K562 (cell line): ENCODE measurements at regions of chr1 and their contacts with region 1.

Region 1: GRCh38 chr1:27603681-27604578 is at the start of gene AHDC1:
- DNase-seq: peak; percentile 90 to 96 (median 93)
- ATAC-seq: peak; percentile 82
- H3K4me3 ChIP-seq: peak within 1 kb of the TSS; percentile 89
- H3K27ac ChIP-seq: peak within 1 kb of the TSS; percentile 80
- H3K4me1 ChIP-seq: peaks cover 69% of the 10 kb centered on the region in 2 experiments
- H3K27me3 ChIP-seq: 0 out of 5 replicates have a peak, but pooled peaks cover 0 to under 1% of the 10 kb centered on the region in 2 experiments
- CTCF ChIP-seq: peak in 2 of 3 experiments; percentile 2 to 15; a peak in 1 of 6 replicates
- EP300 ChIP-seq: no peak
- POLR2A ChIP-seq: peak; percentile 86
- RAD21 ChIP-seq: peak; percentile 14 to 44; a peak in 3 of 4 replicates
- polyA plus RNA-seq, gene AHDC1: 0.21 to 0.59 TPM

Region 2: GRCh38 chr1:26864610-26865527 is 739.1 kb before region 1 on chr1:
- CTCF ChIA-PET with region 1: no interaction called
- POLR2A ChIA-PET with region 1: no interaction called
- in situ Hi-C with region 1: no loop called
- intact Hi-C with region 1: no loop called
- DNase-seq: peak; percentile 99
- ATAC-seq: peak; percentile 96
- H3K4me3 ChIP-seq: peak overlapping the region; percentile 55
- H3K27ac ChIP-seq: peak overlapping the region; percentile 90
- H3K4me1 ChIP-seq: peaks cover 21 to 36% of the 10 kb centered on the region in 2 experiments
- H3K27me3 ChIP-seq: no peaks in the 10 kb centered on the region
- CTCF ChIP-seq: peak in 1 of 3 experiments; percentile 15; a peak in 2 of 6 replicates
- EP300 ChIP-seq: no peak
- POLR2A ChIP-seq: peak; percentile 97
- RAD21 ChIP-seq: no peak

Region 3: DNA sequence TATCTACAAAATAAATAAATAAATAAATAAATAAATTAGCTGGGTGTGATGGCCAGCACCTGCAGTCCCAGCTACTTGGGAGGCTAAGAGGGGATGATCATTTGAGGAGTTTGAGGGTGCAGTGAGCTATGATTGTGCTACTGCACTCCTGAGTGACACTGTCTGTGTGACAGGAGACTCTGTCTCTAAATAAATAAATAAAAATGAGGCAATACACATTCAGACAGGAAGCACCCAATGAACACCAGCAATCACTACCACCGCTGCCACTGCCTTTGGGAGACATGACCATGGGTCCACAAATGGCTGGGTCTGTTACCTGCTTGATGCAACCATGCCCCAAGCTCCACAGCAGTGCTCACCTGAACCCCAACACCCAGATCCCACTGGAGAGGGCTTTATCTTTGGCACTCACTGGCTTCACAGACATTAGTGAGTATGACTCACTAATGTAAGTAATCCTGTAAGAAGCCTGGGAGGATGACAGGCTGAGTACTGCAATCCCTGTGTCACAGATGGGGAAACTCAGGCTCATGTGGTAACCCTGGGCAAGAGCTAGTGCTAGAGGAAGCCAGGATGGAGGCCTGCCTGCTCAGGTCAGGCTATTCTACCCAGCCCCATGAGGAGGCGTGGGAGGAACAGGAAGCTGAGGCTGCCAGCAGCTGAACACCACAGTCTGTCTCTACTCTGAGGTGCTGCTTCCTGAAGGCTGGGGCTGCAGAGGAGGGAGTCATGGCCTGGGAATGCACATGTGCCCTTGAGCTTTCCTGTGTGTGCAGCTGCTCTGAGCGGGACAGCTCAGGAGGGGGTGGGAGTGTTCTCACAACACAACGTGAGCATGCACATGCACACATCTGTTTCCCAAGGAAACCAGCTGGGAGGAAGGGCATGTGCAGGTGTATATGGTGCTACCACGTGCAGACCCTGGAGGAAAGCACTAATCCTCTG is 492.0 kb before region 1 on chr1:
- CTCF ChIA-PET with region 1: no interaction called
- POLR2A ChIA-PET with region 1: no interaction called
- in situ Hi-C with region 1: loop called (anchors 25 kb)
- intact Hi-C with region 1: no loop called
- DNase-seq: peak; percentile 52 to 78 (median 60)
- ATAC-seq: peak; percentile 75
- H3K4me3 ChIP-seq: no peak overlapping the region
- H3K27ac ChIP-seq: peak overlapping the region; percentile 8; the same call in 1 of the 3 replicates
- H3K4me1 ChIP-seq: peaks cover 34 to 53% of the 10 kb centered on the region in 2 experiments
- H3K27me3 ChIP-seq: no peaks in the 10 kb centered on the region
- CTCF ChIP-seq: peak; percentile 39 to 71 (median 40); a peak in 3 of 6 replicates
- EP300 ChIP-seq: peak; percentile 49; the same call in 1 of the 2 replicates
- POLR2A ChIP-seq: no peak
- RAD21 ChIP-seq: peak; percentile 77 to 83

Region 4: GRCh38 chr1:27275696-27276095 is 328.2 kb before region 1 on chr1:
- CTCF ChIA-PET with region 1: no interaction called
- POLR2A ChIA-PET with region 1: no interaction called
- in situ Hi-C with region 1: no loop called
- intact Hi-C with region 1: no loop called
- DNase-seq: no peak
- ATAC-seq: no peak
- H3K4me3 ChIP-seq: no peak overlapping the region
- H3K27ac ChIP-seq: no peak overlapping the region
- H3K4me1 ChIP-seq: no peaks in the 10 kb centered on the region
- H3K27me3 ChIP-seq: no peaks in the 10 kb centered on the region
- CTCF ChIP-seq: no peak
- EP300 ChIP-seq: no peak
- POLR2A ChIP-seq: no peak
- RAD21 ChIP-seq: no peak

Region 5: GRCh38 chr1:27392096-27392777 is 211.7 kb before region 1 on chr1 and contains the start of gene GPR3:
- CTCF ChIA-PET with region 1: interaction called, 7 read pairs
- POLR2A ChIA-PET with region 1: no interaction called
- in situ Hi-C with region 1: loop called (anchors 5 kb)
- intact Hi-C with region 1: loop called (anchors 1 kb)
- DNase-seq: peak; percentile 98 to 100 (median 99)
- ATAC-seq: peak; percentile 94
- H3K4me3 ChIP-seq: peak within 1 kb of the TSS; percentile 96
- H3K27ac ChIP-seq: peak within 1 kb of the TSS; percentile 88
- H3K4me1 ChIP-seq: peaks cover 8 to 44% of the 10 kb centered on the region in 2 experiments
- H3K27me3 ChIP-seq: no peaks in the 10 kb centered on the region
- CTCF ChIP-seq: peak; percentile 68 to 89 (median 84)
- EP300 ChIP-seq: peak; percentile 54; the same call in 1 of the 2 replicates
- POLR2A ChIP-seq: peak; percentile 70
- RAD21 ChIP-seq: peak; percentile 45 to 60
- polyA plus RNA-seq, gene GPR3: 0.24 to 0.59 TPM

Region 6: DNA sequence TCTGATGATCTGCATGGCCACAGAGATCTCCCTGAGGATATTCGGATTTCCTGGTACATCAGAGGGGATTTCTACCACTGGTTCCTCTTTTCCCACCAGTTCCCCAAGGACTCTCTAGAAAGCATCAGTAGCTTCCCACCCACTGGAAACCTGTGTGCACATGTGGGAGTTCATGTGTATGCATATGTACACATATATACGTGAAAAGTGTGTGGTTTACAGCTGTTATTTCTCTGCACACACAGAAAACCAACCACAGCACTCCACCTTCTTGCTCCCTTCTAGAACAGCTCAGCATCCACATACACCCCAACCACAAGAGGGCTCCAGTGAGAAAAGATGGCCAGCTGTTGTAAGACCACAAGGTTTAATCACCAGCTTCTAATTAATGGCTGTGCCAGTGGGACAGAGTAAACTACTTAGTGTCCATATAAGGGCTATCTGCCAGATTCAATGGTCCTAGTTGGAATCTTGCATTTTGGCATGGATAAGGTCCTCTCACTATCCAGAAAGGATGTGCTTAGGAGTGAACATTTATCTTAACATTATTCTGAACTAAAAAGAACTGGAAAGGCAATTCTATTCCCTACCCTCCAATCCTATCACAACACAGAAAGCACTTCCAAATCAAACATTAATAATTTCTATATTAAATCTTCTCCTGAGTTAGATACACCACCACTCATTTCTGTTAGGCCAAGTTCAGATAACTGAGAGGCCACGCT is 187.4 kb before region 1 on chr1:
- CTCF ChIA-PET with region 1: interaction called, 21 read pairs
- POLR2A ChIA-PET with region 1: interaction called, 6 read pairs
- in situ Hi-C with region 1: loop called (anchors 10 kb)
- intact Hi-C with region 1: loop called (anchors 5 kb)
- DNase-seq: peak; percentile 63 to 79 (median 77)
- ATAC-seq: peak; percentile 89
- H3K4me3 ChIP-seq: no peak overlapping the region
- H3K27ac ChIP-seq: no peak overlapping the region; the same call in 2 of the 3 replicates
- H3K4me1 ChIP-seq: no peaks in the 10 kb centered on the region; a peak in 1 of 5 replicates
- H3K27me3 ChIP-seq: no peaks in the 10 kb centered on the region
- CTCF ChIP-seq: peak; percentile 73 to 81 (median 77)
- EP300 ChIP-seq: no peak
- POLR2A ChIP-seq: no peak
- RAD21 ChIP-seq: peak; percentile 63 to 80

Region 7: GRCh38 chr1:27504588-27505419 is 99.1 kb before region 1 on chr1:
- CTCF ChIA-PET with region 1: no interaction called
- POLR2A ChIA-PET with region 1: interaction called, 3 read pairs
- in situ Hi-C with region 1: no loop called
- intact Hi-C with region 1: loop called (anchors 5 kb)
- DNase-seq: peak; percentile 57 to 69 (median 66)
- ATAC-seq: peak; percentile 53
- H3K4me3 ChIP-seq: no peak overlapping the region
- H3K27ac ChIP-seq: peak overlapping the region; percentile 59
- H3K4me1 ChIP-seq: peaks cover 22 to 30% of the 10 kb centered on the region in 2 experiments; a peak in 4 of 5 replicates
- H3K27me3 ChIP-seq: no peaks in the 10 kb centered on the region
- CTCF ChIP-seq: no peak
- EP300 ChIP-seq: no peak
- POLR2A ChIP-seq: no peak
- RAD21 ChIP-seq: no peak

Region 8: DNA sequence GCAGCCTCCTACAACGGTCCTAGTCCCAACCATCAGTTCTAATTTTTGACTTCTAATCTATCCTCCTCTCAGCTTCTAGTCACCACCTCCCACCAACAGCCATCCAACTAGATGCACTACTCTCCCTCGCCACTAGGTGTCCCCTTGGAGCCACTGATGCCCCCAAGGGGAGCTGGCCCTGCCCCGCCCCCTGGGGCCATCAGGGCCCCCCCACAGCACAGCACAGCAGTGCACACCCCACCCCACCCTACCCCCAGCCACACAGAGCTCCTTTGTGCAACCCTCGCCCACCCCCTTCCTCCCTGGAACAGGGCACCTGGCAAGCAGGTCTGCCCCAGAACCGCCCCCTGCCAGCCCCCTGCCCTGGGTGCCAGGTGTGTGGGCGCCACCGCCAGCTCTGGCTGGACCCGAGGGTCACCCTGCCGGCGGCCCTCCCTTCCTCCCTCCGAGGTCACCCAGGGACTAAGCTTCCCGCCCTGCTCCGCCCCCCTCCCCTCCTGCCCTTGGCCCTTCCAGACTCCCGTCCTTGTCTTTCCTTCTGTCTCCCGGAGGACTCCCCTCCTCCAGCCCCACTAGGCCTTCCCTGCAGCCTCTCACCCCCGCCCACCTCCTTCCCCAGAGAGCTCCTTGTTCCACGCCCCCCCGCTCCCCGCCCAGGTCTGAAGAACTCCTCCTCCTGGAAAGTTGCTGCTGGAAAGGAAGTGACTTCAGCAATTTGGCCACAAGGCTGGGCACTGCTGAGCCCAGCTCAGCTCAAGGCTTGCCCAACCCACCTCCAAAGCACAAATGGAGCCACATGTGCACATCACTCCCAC is 46.9 kb before region 1 on chr1:
- CTCF ChIA-PET with region 1: interaction called, 18 read pairs
- POLR2A ChIA-PET with region 1: interaction called, 8 read pairs
- in situ Hi-C with region 1: loop called (anchors 10 kb)
- intact Hi-C with region 1: loop called (anchors 1 kb)
- DNase-seq: peak; percentile 93 to 95 (median 94)
- ATAC-seq: peak; percentile 84
- H3K4me3 ChIP-seq: no peak overlapping the region
- H3K27ac ChIP-seq: peak overlapping the region; percentile 75
- H3K4me1 ChIP-seq: peaks cover 59 to 62% of the 10 kb centered on the region in 2 experiments
- H3K27me3 ChIP-seq: no peaks in the 10 kb centered on the region
- CTCF ChIP-seq: peak; percentile 91 to 93 (median 92)
- EP300 ChIP-seq: no peak; the same call in 1 of the 2 replicates
- POLR2A ChIP-seq: no peak
- RAD21 ChIP-seq: peak; percentile 79 to 89

Region 9: DNA sequence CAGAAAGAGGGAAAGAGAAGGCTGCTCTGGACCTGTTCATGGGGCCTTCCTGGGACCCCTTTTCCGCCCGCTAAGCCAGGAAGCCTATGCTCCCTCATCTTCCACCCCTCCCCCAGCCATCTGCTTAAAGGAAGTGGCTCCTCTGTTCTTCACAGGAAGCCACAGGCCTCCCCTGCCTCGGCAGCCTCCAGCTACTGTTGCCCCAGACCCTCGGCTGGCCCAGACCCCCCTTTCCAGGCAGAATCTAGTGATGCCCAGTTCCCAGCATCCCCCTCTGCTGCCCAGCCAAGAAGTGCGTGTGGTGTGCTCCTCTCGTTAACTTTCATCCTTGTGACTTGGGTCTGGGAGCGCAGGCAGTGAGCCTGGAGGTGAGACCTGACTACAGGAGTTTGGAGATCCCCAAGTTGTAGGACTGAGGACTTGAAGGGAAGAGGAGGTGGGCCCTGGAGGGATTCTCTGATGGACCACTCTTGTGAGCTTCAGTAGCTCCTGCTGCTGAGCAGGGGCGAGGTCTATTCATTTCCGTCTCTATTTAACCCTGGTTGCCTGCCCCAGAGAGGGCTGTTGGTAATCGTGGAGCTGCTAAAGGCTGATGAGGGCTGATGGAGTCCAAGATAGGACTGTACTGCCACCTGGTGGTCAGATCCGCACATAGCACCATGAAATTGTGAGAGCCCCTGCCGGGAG is 58.9 kb after region 1 on chr1:
- CTCF ChIA-PET with region 1: interaction called, 157 read pairs
- POLR2A ChIA-PET with region 1: interaction called, 6 read pairs
- in situ Hi-C with region 1: no loop called
- intact Hi-C with region 1: loop called (anchors 1 kb)
- DNase-seq: peak; percentile 75 to 91 (median 82)
- ATAC-seq: peak; percentile 76
- H3K4me3 ChIP-seq: no peak overlapping the region
- H3K27ac ChIP-seq: peak overlapping the region; percentile 30; the same call in 2 of the 3 replicates
- H3K4me1 ChIP-seq: peaks cover 27 to 39% of the 10 kb centered on the region in 2 experiments
- H3K27me3 ChIP-seq: no peaks in the 10 kb centered on the region
- CTCF ChIP-seq: peak; percentile 92 to 97 (median 96)
- EP300 ChIP-seq: no peak
- POLR2A ChIP-seq: no peak
- RAD21 ChIP-seq: peak; percentile 98 to 99